Posterior cingulate gyrus (tissue), 11 donors: ENCODE measurements at regions of chr1 and their contacts with region 1.

Region 1: DNA sequence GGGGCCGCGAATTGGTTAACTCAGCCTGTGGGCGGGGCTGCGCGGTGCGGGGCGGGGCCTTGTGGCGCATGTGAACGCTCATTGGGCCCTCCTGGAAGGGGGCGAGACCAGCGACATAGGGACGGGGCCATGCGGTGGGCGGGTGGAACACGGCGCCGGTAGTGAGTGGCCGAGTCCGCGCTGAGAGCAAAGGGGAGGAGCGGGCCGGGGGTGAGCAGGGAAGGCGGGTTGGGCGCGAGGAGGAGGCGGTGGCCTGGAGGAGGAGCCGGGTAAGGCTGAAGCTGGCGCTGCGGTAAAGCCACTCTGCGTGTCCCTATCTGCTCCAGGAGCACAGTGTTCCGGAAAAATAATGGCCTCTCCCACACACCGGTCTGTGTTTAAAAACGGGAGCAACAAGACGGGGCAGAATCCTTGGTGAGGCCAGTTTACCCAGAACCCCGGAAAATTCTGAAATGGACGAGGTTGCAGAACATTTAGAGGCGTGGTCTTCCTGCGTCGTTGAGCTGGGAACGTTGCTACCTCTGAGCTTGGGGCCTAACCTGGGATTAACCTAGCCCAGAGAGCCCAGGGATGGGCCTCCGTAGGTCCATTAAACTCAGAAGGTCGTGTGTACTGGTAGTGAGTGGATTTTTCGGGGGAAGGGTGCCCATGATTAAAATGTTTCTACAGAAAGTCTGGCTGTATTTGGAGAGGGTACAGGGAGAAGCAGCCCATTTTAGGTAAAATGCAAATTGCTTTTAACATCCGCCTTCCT is 533 bp upstream of the CTNNBIP1 start:
- DNase-seq: peak; percentile 99 to 100 (median 100)

Region 2: DNA sequence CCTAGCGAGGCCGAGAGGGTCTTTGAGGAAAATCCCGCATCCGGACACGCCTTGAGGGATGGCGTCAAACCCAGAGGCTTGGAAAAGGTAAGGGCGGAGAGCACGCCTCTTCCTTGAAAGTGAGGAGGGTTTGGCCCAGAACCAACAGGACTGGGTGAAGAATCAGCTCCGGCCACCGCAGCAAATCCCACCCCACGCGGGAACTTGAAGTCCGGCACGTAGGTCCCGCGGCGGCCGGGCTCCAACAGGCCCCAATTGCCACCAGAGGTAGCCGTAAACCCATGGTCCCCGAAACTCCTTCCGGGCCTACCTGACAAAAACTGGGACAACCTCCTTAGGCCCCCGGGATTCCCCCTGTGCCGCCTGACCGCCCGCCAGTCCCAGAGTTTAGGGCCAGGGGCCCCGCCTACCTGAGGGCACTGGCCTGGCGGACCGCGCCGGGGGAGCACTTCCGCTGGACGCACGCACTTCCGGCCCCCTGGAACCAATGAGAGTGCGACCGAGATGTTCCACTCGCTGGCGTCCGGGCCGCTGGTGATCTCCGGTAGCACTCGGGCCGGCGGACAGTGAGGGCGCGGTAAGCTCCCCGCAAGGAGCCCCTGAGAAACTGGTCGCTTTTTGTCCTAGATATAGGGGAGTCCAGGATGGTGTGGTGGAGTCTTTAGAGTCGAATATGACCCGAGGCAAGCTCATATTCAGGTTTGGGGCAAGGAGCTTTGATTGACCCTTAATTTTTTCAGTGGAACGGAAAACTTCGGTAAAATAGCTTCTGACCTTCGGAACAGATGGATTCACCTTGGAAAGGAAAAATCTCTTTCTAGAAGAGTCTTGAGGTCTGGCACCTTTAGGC is 32.6 kb after region 1 on chr1 and contains the starts of genes LZIC and NMNAT1:
- intact Hi-C with region 1: loop called (anchors 2 kb)
- DNase-seq: peak; percentile 89 to 99 (median 93)

Region 3: GRCh38 chr1:10014016-10014415 is 103.4 kb after region 1 on chr1:
- intact Hi-C with region 1: no loop called
- DNase-seq: no peak